ENCODE measurements at regions of chr2 and their contacts with region 1.

Region 1: GRCh38 chr2:73233154-73233931 is at the start of gene PRADC1:
- DNase-seq: peak; percentile 97
- ATAC-seq: peak; percentile 85
- H3K4me3 ChIP-seq: peak within 1 kb of the TSS; percentile 89 to 99 (median 94)
- H3K4me3 Mint-ChIP-seq: peak within 1 kb of the TSS; percentile 99
- H3K27ac ChIP-seq: peak within 1 kb of the TSS; percentile 87 to 90
- H3K27ac Mint-ChIP-seq: peak within 1 kb of the TSS; percentile 93
- H3K4me1 ChIP-seq: peaks cover 18 to 20% of the 10 kb centered on the region in 2 donors
- H3K4me1 Mint-ChIP-seq: peaks cover 38% of the 10 kb centered on the region
- H3K27me3 ChIP-seq: no peaks in the 10 kb centered on the region
- H3K27me3 Mint-ChIP-seq: no peaks in the 10 kb centered on the region
- CTCF ChIP-seq: no peak
- total RNA-seq, gene PRADC1: 2.3 and 4.2 TPM in 2 replicates

Region 2: GRCh38 chr2:73071360-73072133 is 161.8 kb before region 1 on chr2 and contains the start of gene SFXN5:
- CTCF ChIA-PET with region 1: no interaction called
- POLR2A ChIA-PET with region 1: interaction called, 13 read pairs
- intact Hi-C with region 1: loop called (anchors 1 kb)
- DNase-seq: peak; percentile 98
- ATAC-seq: peak; percentile 90
- H3K4me3 ChIP-seq: peak within 1 kb of the TSS; percentile 51 to 99 (median 86)
- H3K4me3 Mint-ChIP-seq: peak within 1 kb of the TSS; percentile 93
- H3K27ac ChIP-seq: peak within 1 kb of the TSS; percentile 77 to 84
- H3K27ac Mint-ChIP-seq: peak within 1 kb of the TSS; percentile 95
- H3K4me1 ChIP-seq: peaks cover 6 to 17% of the 10 kb centered on the region in 2 donors
- H3K4me1 Mint-ChIP-seq: peaks cover 24% of the 10 kb centered on the region
- H3K27me3 ChIP-seq: no peaks in the 10 kb centered on the region
- H3K27me3 Mint-ChIP-seq: no peaks in the 10 kb centered on the region
- CTCF ChIP-seq: no peak
- total RNA-seq, gene SFXN5: 16.9 and 17.8 TPM in 2 replicates

Region 3: GRCh38 chr2:73268830-73269685 is 35.7 kb after region 1 on chr2:
- CTCF ChIA-PET with region 1: no interaction called
- POLR2A ChIA-PET with region 1: no interaction called
- intact Hi-C with region 1: loop called (anchors 1 kb)
- DNase-seq: peak; percentile 74
- ATAC-seq: peak; percentile 85
- H3K4me3 ChIP-seq: peak overlapping the region in 2 of 5 experiments; percentile 19 to 33
- H3K4me3 Mint-ChIP-seq: peak overlapping the region; percentile 49
- H3K27ac ChIP-seq: no peak overlapping the region
- H3K27ac Mint-ChIP-seq: no peak overlapping the region
- H3K4me1 ChIP-seq: no peaks in the 10 kb centered on the region
- H3K4me1 Mint-ChIP-seq: peaks cover 18% of the 10 kb centered on the region
- H3K27me3 ChIP-seq: no peaks in the 10 kb centered on the region
- H3K27me3 Mint-ChIP-seq: no peaks in the 10 kb centered on the region
- CTCF ChIP-seq: peak; percentile 21

Region 4: DNA sequence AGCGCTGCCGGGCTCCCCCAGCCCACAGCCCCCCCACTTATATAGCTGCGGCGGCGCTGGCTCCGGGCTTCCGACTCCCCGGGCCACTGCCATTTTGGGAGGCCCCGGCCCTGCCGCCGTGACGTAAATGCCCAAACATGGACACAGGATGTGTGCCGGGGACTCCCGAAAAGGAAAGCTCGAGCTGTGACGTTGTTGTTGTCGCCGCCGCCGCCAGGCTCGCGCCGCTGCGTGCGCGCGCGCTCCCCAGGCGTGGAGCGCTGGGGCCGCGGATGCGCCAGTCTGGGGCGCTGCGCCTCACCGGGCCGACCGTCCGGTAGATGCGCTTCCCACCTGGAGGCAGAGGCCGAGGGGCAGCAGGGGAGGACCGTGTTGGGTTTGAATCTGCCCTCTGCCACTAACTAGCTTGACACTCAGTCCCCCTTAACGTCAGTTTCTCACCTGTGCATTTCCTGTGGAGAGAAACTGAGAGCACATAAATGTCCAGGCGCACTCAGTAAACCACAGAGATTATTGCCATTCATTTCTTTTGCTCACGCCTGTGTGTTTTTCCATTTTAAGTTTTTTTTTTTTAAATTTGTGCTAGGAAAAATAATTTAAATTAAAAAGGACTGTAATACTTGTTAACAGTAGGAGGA is 60.3 kb after region 1 on chr2 and contains the start of gene EGR4:
- CTCF ChIA-PET with region 1: interaction called, 18 read pairs
- POLR2A ChIA-PET with region 1: no interaction called
- intact Hi-C with region 1: no loop called
- DNase-seq: peak; percentile 91
- ATAC-seq: peak; percentile 81
- H3K4me3 ChIP-seq: peak within 1 kb of the TSS; percentile 0 to 55 (median 46)
- H3K4me3 Mint-ChIP-seq: peak within 1 kb of the TSS; percentile 81
- H3K27ac ChIP-seq: no peak within 1 kb of the TSS
- H3K27ac Mint-ChIP-seq: peak within 1 kb of the TSS; percentile 70
- H3K4me1 ChIP-seq: peaks cover 28 to 37% of the 10 kb centered on the region in 2 donors
- H3K4me1 Mint-ChIP-seq: peaks cover 22% of the 10 kb centered on the region
- H3K27me3 ChIP-seq: peaks cover 2 to 73% (median 64%) of the 10 kb centered on the region in 4 experiments
- H3K27me3 Mint-ChIP-seq: peaks cover 58% of the 10 kb centered on the region
- CTCF ChIP-seq: no peak
- total RNA-seq, gene EGR4: 0.30 and 0.41 TPM in 2 replicates

Region 5: GRCh38 chr2:74958274-74959105 is 1725.1 kb after region 1 on chr2 and contains the start of gene POLE4:
- CTCF ChIA-PET with region 1: no interaction called
- POLR2A ChIA-PET with region 1: no interaction called
- intact Hi-C with region 1: loop called (anchors 5 kb)
- DNase-seq: peak; percentile 96
- ATAC-seq: peak; percentile 91
- H3K4me3 ChIP-seq: peak within 1 kb of the TSS; percentile 44 to 80 (median 65)
- H3K4me3 Mint-ChIP-seq: peak within 1 kb of the TSS; percentile 88
- H3K27ac ChIP-seq: peak within 1 kb of the TSS; percentile 83 to 92
- H3K27ac Mint-ChIP-seq: peak within 1 kb of the TSS; percentile 91
- H3K4me1 ChIP-seq: peaks cover 6 to 17% of the 10 kb centered on the region in 2 donors
- H3K4me1 Mint-ChIP-seq: peaks cover 72% of the 10 kb centered on the region
- H3K27me3 ChIP-seq: no peaks in the 10 kb centered on the region
- H3K27me3 Mint-ChIP-seq: no peaks in the 10 kb centered on the region
- CTCF ChIP-seq: no peak
- total RNA-seq, gene POLE4: 53.3 and 56.0 TPM in 2 replicates

Measured in B cell (primary cell).